Ascending aorta (tissue), 2 donors: ENCODE measurements at regions of chr6 and their contacts with region 1.

Region 1: GRCh38 chr6:84033523-84034451 is at the start of gene MRAP2:
- DNase-seq: peak in 1 of 2 donors; percentile 74
- H3K4me3 ChIP-seq: peak within 1 kb of the TSS; percentile 52 to 88
- H3K27ac ChIP-seq: peak within 1 kb of the TSS; percentile 87 to 96
- H3K4me1 ChIP-seq: peaks cover 0 to 49% of the 10 kb centered on the region in 2 donors
- H3K27me3 ChIP-seq: no peaks in the 10 kb centered on the region
- CTCF ChIP-seq: no peak
- total RNA-seq, gene MRAP2: 47.3 TPM

Region 2: GRCh38 chr6:84052204-84052882 is 18.6 kb after region 1 on chr6:
- intact Hi-C with region 1: loop called (anchors 2 kb)
- DNase-seq: peak; percentile 40 to 85
- H3K4me3 ChIP-seq: peak overlapping the region in 1 of 2 donors; percentile 32
- H3K27ac ChIP-seq: peak overlapping the region; percentile 76 to 79
- H3K4me1 ChIP-seq: peaks cover 3 to 32% of the 10 kb centered on the region in 2 donors
- H3K27me3 ChIP-seq: no peaks in the 10 kb centered on the region
- CTCF ChIP-seq: no peak

Region 3: GRCh38 chr6:84093441-84094435 is 60.0 kb after region 1 on chr6:
- intact Hi-C with region 1: loop called (anchors 5 kb)
- DNase-seq: no peak
- H3K4me3 ChIP-seq: no peak overlapping the region
- H3K27ac ChIP-seq: peak overlapping the region; percentile 45 to 63
- H3K4me1 ChIP-seq: peaks cover 2 to 21% of the 10 kb centered on the region in 2 donors
- H3K27me3 ChIP-seq: no peaks in the 10 kb centered on the region
- CTCF ChIP-seq: no peak